ENCODE measurements at regions of chr2 and their contacts with region 1.

Region 1: DNA sequence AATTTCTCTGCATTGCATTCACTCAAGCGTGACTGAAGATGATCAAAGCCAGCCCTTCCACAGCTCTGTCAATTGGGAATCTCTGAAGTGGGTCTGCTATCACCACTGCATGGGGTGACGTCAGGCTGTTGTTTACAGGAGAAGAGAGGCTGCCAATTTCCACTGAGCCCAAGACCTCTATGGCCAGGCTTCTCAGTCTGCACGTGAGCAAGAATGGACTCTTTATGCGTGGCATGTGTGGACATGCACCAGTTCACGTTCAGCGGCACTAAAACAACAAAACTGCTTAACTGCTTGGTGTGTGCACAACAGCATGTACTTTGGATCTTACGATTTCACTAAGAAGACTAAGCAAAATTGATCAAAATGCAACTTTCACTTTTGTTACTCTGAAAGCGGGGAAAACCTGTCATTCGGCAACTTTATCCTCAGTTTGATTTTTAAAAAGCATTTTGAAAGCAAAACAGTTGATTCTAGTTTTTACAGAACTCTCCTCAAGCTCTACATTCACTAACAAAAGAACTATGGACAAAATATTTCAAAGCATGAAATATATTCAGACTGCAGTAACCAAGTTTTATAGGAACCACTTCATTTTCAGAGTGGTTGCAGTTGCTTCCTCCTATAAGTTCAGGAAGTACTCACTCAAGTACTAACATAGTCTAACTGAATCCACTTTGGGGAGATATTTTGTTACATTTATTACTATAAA is 77.0 kb upstream of the SERTAD2 start:
- DNase-seq: no peak
- H3K4me3 ChIP-seq: no peak overlapping the region
- H3K27ac ChIP-seq: no peak overlapping the region
- H3K4me1 ChIP-seq: 0 out of 2 replicates have a peak, but pooled peaks cover 4% of the 10 kb centered on the region
- H3K27me3 ChIP-seq: no peaks in the 10 kb centered on the region
- CTCF ChIP-seq: no peak

Region 2: DNA sequence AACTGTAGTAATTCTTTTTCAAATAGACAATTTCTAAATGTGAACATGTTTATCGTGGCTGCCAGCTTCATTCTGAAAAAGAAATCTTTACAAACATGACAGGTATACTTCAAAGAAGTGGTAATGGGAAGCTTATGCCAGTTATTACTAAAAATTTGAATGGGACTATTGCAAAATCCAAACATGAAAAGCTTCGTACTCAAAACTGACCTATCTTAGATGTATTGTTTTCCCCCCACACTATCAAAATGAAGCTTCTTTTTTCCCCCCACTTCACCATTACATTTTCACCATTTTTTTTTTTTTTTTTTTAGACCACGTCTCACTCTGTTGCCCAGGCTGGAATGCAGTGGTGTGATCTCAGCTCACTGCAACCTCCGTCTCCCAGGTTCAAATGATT is 26.5 kb before region 1 on chr2:
- CTCF ChIA-PET with region 1: no interaction called
- POLR2A ChIA-PET with region 1: interaction called, 19 read pairs
- intact Hi-C with region 1: no loop called
- DNase-seq: no peak
- H3K4me3 ChIP-seq: no peak overlapping the region
- H3K27ac ChIP-seq: no peak overlapping the region
- H3K4me1 ChIP-seq: peaks cover 1% of the 10 kb centered on the region; the same call in 1 of the 2 replicates
- H3K27me3 ChIP-seq: no peaks in the 10 kb centered on the region
- CTCF ChIP-seq: no peak

Measured in PC-9 (cell line).